GM13976 (cell line): ENCODE measurements at regions of chr1 and their contacts with region 1.

Region 1: GRCh38 chr1:207404849-207405525 is 49.1 kb upstream of the CR2 start:
- DNase-seq: peak; percentile 62
- CTCF ChIP-seq: peak; percentile 58

Region 2: DNA sequence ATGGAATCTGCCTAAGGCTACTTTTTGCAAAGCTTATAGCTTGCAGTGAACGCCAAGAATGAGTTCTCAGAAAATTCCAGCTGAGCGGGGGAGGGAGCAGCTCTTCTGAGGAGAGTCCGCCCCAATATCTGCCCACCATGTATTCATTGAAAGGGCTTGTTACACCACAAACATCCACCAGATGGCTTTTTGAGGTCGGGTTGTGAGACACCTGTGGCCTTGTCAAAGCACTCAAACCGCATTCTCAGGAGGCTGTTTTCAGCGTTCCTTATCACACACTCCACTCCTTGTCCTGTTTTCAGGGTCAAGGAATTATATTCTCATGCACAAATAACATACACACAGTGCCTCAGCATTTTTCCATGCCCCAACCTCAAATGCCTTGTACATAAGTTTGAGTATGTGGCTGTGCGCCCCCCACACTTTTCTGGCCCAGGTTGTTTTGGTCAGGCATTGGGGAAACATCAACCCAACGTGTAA is 320.2 kb before region 1 on chr1:
- in situ Hi-C with region 1: loop called (anchors 5 kb)
- DNase-seq: peak; percentile 59
- CTCF ChIP-seq: peak; percentile 68